PC-3 (cell line): ENCODE measurements at regions of chr9 and their contacts with region 1.

Region 1: DNA sequence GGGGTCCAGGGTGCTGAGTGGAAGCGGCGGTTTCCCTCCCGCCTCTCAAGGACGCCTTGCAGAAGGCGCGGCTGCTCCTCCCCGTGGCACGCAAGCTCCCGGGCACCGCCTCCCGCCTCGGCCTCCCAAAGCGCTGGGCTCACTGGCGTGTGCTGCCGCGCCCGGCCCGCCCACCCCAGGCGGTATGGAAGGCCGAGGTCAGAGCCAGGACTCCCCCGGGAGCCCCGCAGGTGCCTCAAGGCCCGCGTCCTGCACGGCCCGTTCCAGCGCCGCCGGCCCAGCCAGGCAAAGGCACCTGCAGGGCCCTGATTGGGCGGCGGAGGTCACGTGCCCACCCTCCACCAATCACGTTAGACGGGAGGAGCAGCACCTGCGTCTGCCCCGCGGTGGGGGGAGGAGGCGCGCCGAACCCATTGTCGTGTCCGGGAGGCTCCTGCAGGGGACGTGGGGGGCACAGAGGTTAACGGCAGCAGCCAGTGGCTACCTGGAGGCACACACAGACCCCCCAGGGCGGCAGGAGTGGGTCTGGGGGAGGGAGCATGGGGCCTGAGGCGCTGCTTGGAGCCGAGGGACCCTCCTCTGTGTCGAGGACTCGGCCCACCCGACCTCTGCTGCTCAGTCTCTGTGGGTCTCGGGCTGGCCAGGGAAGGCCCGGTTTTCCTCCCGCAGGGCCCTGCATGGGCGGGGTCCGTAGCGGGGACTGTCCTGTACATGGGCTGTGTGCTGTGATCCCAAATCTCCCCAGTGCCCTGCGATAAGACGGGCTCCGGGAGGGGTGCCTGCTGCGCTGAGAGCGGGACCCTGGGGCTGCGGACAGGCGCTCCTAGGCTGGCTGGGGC is 2.0 kb upstream of the LCN12 start:
- DNase-seq: peak; percentile 88
- ATAC-seq: peak; percentile 88
- H3K4me3 ChIP-seq: peak overlapping the region; percentile 69
- H3K27ac ChIP-seq: peak overlapping the region; percentile 54
- H3K4me1 ChIP-seq: peaks cover 16% of the 10 kb centered on the region
- H3K27me3 ChIP-seq: no peaks in the 10 kb centered on the region
- CTCF ChIP-seq: no peak

Region 2: GRCh38 chr9:136991993-136992818 is 42.2 kb after region 1 on chr9 and contains the start of gene PAXX:
- CTCF ChIA-PET with region 1: interaction called, 9 read pairs
- POLR2A ChIA-PET with region 1: no interaction called
- intact Hi-C with region 1: loop called (anchors 2 kb)
- DNase-seq: peak; percentile 82
- ATAC-seq: peak; percentile 71
- H3K4me3 ChIP-seq: peak within 1 kb of the TSS; percentile 89
- H3K27ac ChIP-seq: peak within 1 kb of the TSS; percentile 59
- H3K4me1 ChIP-seq: peaks cover 24% of the 10 kb centered on the region
- H3K27me3 ChIP-seq: no peaks in the 10 kb centered on the region
- CTCF ChIP-seq: no peak
- total RNA-seq, gene PAXX: 113 and 137 TPM in 2 replicates

Region 3: GRCh38 chr9:137034863-137035761 is 85.1 kb after region 1 on chr9:
- CTCF ChIA-PET with region 1: interaction called, 17 read pairs
- POLR2A ChIA-PET with region 1: interaction called, 3 read pairs
- intact Hi-C with region 1: loop called (anchors 1 kb)
- DNase-seq: peak; percentile 78
- ATAC-seq: peak; percentile 92
- H3K4me3 ChIP-seq: peak overlapping the region; percentile 57
- H3K27ac ChIP-seq: no peak overlapping the region
- H3K4me1 ChIP-seq: peaks cover 8% of the 10 kb centered on the region
- H3K27me3 ChIP-seq: no peaks in the 10 kb centered on the region
- CTCF ChIP-seq: peak; percentile 83

Region 4: GRCh38 chr9:137070201-137070905 is 120.3 kb after region 1 on chr9 and contains the start of gene SAPCD2:
- CTCF ChIA-PET with region 1: no interaction called
- POLR2A ChIA-PET with region 1: interaction called, 10 read pairs
- intact Hi-C with region 1: no loop called
- DNase-seq: peak; percentile 88
- ATAC-seq: peak; percentile 82
- H3K4me3 ChIP-seq: peak within 1 kb of the TSS; percentile 84
- H3K27ac ChIP-seq: no peak within 1 kb of the TSS
- H3K4me1 ChIP-seq: peaks cover 20% of the 10 kb centered on the region
- H3K27me3 ChIP-seq: no peaks in the 10 kb centered on the region
- CTCF ChIP-seq: no peak
- total RNA-seq, gene SAPCD2: 98.4 and 134 TPM in 2 replicates

Region 5: GRCh38 chr9:137150617-137151457 is 200.8 kb after region 1 on chr9:
- CTCF ChIA-PET with region 1: no interaction called
- POLR2A ChIA-PET with region 1: interaction called, 42 read pairs
- intact Hi-C with region 1: no loop called
- DNase-seq: peak; percentile 94
- ATAC-seq: peak; percentile 65
- H3K4me3 ChIP-seq: no peak overlapping the region
- H3K27ac ChIP-seq: no peak overlapping the region
- H3K4me1 ChIP-seq: no peaks in the 10 kb centered on the region; the same call in 1 of the 2 replicates
- H3K27me3 ChIP-seq: no peaks in the 10 kb centered on the region
- CTCF ChIP-seq: no peak